Thyroid gland (tissue), 4 donors: ENCODE measurements at regions of chr22 and their contacts with region 1.

Region 1: DNA sequence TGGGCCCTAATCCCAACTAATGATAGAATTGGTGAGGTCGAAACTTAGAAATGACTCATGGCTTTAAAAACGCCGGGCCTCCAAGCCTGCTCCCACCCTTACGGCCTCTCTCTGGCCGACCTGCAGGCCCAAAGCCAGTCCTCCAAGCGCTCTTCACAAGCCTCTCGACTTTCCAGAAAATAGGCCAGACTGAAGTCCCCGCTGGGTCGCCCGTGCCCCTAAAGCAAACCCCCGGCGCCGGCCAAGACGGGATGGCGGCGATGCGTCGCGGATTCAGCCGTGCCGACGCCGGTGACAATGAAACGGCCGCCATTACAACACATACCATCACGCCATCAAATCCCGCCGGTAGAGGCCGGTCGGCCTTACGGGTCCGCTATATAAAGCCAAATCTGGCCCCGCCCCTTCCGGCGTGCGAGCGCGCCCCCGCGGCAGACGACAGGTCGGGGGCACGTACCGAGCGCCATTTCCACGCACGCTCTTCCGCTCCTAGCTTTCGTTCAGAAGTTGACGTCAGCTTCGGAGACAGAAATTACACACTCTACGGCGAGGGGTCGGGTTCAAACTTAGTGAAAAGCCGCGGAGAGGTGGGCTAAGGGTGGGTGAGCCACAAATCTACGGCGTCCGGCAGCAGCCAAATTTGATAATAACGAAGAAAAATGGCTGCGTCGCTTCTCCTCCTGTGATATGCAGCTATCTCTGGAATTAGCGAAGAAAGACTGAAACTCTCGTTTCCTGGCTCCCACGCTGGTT is at the start of gene RPL3:
- DNase-seq: peak; percentile 96
- H3K4me3 ChIP-seq: peak within 1 kb of the TSS; percentile 48 to 71 (median 69)
- H3K27ac ChIP-seq: peak within 1 kb of the TSS; percentile 96 to 97 (median 96)
- H3K4me1 ChIP-seq: peaks cover 20 to 36% of the 10 kb centered on the region in 2 donors
- H3K27me3 ChIP-seq: no peaks in the 10 kb centered on the region
- CTCF ChIP-seq: peak in 3 of 6 experiments; percentile 22 to 31 (median 24)
- POLR2A ChIP-seq: peak; percentile 78 to 94
- total RNA-seq, gene RPL3: 1,451 to 2,031 (median 1,880) TPM

Region 2: DNA sequence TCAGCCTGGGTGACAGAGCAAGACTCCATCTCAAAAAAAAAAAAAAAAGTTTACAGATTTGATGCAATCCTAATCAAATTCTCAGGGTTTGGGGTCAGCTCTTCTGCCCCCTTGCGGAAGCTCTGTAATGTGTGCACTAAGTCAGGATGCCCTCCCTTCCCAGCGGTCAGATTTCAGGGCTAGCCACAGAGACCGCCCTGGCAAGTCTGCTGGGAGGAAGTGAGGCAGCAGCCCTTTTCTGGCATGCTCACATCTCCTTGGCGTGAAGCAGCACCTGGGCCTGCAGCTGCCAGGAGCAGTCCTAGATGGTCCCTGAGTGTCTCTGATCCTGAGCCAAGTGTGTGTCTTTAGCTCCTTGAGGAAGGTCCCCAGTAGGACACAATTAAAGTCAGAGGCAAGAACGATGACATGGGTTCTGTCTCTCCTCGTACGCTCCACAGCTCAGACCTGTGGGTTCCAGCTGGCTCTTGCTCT is 316.2 kb before region 1 on chr22:
- intact Hi-C with region 1: loop called (anchors 10 kb)
- DNase-seq: peak; percentile 86 to 89
- H3K4me3 ChIP-seq: no peak overlapping the region
- H3K27ac ChIP-seq: no peak overlapping the region
- H3K4me1 ChIP-seq: peaks cover 0 to 7% of the 10 kb centered on the region in 2 donors
- H3K27me3 ChIP-seq: no peaks in the 10 kb centered on the region
- CTCF ChIP-seq: peak; percentile 27 to 89 (median 70)
- POLR2A ChIP-seq: no peak

Region 3: DNA sequence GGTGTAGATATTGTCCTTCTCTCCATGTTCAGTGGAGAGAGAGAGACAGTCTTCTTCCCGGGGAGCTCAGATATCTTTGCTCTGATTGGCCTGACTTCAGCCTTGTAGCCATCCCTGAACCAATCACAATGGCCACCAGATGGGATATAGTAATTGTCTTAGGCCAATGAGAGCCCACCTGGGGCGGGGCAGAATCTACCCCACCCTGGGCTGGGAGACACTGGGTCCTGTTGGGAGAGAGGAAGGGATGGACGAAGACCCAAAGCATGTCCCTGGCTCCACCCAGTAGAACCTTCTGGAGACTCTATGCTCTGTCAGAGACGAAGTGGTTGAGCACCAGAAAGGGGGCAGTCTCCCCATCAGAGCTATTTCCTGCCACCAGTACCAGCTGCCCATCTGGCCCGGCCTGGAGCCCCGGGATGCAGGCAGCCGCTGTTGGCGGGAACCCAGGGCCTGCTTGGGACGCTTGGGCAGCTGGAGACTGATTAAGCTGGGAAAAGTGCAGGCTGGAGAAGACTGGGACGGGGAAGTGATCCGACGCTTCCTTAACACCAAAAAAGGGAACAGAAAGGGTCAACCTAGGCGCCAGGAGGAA is 135.4 kb before region 1 on chr22:
- intact Hi-C with region 1: no loop called
- DNase-seq: no peak
- H3K4me3 ChIP-seq: no peak overlapping the region
- H3K27ac ChIP-seq: no peak overlapping the region
- H3K4me1 ChIP-seq: no peaks in the 10 kb centered on the region
- H3K27me3 ChIP-seq: no peaks in the 10 kb centered on the region
- CTCF ChIP-seq: no peak
- POLR2A ChIP-seq: no peak